Activated CD4-positive, alpha-beta T cell treated with anti-CD3 and anti-CD28 coated beads for 36 hours (primary cell): ENCODE measurements at regions of chr12 and their contacts with region 1.

Region 1: DNA sequence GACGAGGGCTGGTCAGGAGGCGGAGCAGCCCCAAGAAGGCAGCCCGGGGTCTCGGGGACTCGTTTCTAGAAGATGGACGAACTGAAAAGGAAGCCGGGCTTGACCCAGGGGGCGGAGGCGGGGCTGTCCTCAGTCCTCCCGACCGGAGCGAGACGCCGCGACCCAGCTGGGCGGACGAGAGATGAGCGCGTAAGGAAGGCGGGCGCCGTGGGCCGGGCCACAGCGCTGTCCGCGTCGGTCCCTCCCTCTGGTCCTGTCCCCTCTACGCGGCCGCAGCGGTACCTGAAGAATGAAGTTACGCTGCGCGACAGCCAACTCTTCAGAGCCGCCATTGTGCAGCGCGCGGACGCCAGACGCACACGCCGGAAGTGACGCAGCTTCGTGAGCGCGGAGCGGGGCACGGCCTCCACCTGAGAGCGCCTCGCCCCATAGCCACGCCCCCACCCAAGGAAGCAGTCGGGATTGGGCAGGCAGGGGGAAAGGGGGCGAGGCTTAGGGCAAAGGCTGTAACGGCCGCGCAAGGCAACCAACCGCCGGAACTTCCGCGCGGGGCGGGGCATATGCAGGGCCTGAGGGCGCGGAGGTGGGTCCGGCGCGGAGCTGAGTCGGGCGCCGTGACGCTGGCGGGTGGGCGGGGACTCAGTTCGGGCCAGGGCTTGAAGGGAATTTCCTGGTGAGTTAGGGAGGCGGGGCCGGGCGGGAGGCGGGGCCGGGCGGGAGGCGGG is at the start of gene DIABLO:
- DNase-seq: peak; percentile 100
- ATAC-seq: peak; percentile 98
- H3K4me3 Mint-ChIP-seq: peak within 1 kb of the TSS; percentile 92
- H3K27ac Mint-ChIP-seq: peak within 1 kb of the TSS; percentile 93
- H3K4me1 Mint-ChIP-seq: peaks cover 29% of the 10 kb centered on the region
- H3K27me3 Mint-ChIP-seq: no peaks in the 10 kb centered on the region
- total RNA-seq, gene DIABLO: 46.3 to 47.0 TPM

Region 2: GRCh38 chr12:121196902-121197301 is 1028.9 kb before region 1 on chr12:
- CTCF ChIA-PET with region 1: no interaction called
- POLR2A ChIA-PET with region 1: no interaction called
- intact Hi-C with region 1: no loop called
- DNase-seq: no peak
- ATAC-seq: peak; percentile 75
- H3K4me3 Mint-ChIP-seq: no peak overlapping the region
- H3K27ac Mint-ChIP-seq: no peak overlapping the region
- H3K4me1 Mint-ChIP-seq: peaks cover 12% of the 10 kb centered on the region
- H3K27me3 Mint-ChIP-seq: no peaks in the 10 kb centered on the region

Region 3: DNA sequence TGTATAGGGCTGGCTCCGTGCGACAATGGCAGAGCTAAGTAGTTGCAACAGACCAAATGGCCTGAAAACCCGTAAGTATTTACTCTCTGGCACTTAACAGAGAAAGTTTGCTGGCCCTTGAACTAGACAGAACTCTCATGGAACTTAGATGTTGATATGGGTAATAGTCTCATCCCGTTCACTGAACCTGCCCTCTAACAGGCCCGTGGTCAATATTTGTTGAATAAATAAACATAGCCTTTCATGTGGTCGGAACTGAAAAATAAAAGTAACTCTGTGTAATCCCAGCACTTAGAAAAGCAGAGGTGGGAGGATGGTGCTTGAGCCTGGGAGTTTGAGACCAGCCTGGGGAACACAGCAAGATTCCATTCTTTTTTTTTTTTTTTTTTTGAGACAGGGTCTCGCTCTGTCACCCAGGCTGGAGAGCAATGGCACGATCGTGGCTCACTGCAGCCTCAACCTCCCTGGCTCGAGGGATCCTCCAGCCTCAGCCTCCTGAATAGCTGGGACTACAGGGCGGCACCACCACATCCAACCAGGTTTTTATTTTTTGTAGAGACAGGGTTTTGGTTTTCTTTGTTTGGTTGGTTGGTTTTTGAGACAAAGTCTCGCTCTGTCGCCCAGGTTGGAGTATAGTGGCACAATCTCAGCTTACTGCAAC is 674.7 kb before region 1 on chr12:
- CTCF ChIA-PET with region 1: no interaction called
- POLR2A ChIA-PET with region 1: no interaction called
- intact Hi-C with region 1: no loop called
- DNase-seq: no peak
- ATAC-seq: no peak
- H3K4me3 Mint-ChIP-seq: no peak overlapping the region
- H3K27ac Mint-ChIP-seq: no peak overlapping the region
- H3K4me1 Mint-ChIP-seq: peaks cover 6% of the 10 kb centered on the region
- H3K27me3 Mint-ChIP-seq: no peaks in the 10 kb centered on the region

Region 4: GRCh38 chr12:121712461-121713256 is 513.2 kb before region 1 on chr12 and contains the start of gene TMEM120B:
- CTCF ChIA-PET with region 1: no interaction called
- POLR2A ChIA-PET with region 1: no interaction called
- intact Hi-C with region 1: loop called in 1 of 2 experiments (anchors 5 kb)
- DNase-seq: peak; percentile 90
- ATAC-seq: peak; percentile 87
- H3K4me3 Mint-ChIP-seq: peak within 1 kb of the TSS; percentile 95
- H3K27ac Mint-ChIP-seq: peak within 1 kb of the TSS; percentile 91
- H3K4me1 Mint-ChIP-seq: peaks cover 16% of the 10 kb centered on the region
- H3K27me3 Mint-ChIP-seq: no peaks in the 10 kb centered on the region
- total RNA-seq, gene TMEM120B: 8.8 to 11.7 TPM

Region 5: DNA sequence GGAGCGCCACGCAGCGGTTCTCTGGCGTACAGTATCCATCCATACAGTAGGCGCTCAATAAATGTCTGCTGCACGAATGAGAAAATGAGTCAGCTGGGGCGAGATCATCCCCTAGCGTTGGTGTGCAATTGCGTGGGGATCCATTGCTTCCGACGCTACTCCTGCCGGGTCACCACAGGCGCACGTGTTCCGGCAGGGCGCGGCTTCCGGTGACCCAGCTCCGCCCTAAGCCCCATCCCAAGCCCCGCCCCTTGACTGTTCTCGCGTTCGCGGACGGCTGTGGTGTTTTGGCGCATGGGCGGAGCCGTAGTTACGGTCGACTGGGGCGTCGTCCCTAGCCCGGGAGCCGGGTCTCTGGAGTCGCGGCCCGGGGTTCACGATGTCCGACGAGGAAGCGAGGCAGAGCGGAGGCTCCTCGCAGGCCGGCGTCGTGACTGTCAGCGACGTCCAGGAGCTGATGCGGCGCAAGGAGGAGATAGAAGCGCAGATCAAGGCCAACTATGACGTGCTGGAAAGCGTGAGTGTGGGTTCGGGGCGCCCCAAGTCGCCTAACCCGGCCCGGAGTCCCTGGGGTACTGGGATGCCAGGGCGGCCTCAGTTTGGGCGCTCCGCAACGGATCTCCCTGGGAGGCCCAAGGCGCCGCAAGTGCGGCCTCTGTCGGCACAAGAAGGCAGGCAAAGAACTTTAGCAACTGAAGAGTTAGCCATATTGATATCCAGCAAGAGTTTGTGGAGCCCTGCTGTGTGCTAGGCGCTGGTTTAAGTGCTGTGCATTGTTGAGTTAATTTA is 337.2 kb before region 1 on chr12 and contains the start of gene PSMD9:
- CTCF ChIA-PET with region 1: no interaction called
- POLR2A ChIA-PET with region 1: no interaction called
- intact Hi-C with region 1: loop called in 1 of 2 experiments (anchors 1 kb)
- DNase-seq: peak; percentile 99
- ATAC-seq: peak; percentile 94
- H3K4me3 Mint-ChIP-seq: peak within 1 kb of the TSS; percentile 89
- H3K27ac Mint-ChIP-seq: peak within 1 kb of the TSS; percentile 98
- H3K4me1 Mint-ChIP-seq: peaks cover 33% of the 10 kb centered on the region
- H3K27me3 Mint-ChIP-seq: no peaks in the 10 kb centered on the region
- total RNA-seq, gene PSMD9: 50.4 to 56.2 TPM

Region 6: GRCh38 chr12:122182887-122183585 is 42.8 kb before region 1 on chr12 and contains the start of gene LRRC43:
- CTCF ChIA-PET with region 1: no interaction called
- POLR2A ChIA-PET with region 1: no interaction called
- intact Hi-C with region 1: no loop called
- DNase-seq: peak; percentile 54
- ATAC-seq: peak; percentile 72
- H3K4me3 Mint-ChIP-seq: peak within 1 kb of the TSS; percentile 65
- H3K27ac Mint-ChIP-seq: no peak within 1 kb of the TSS
- H3K4me1 Mint-ChIP-seq: peaks cover 3% of the 10 kb centered on the region
- H3K27me3 Mint-ChIP-seq: peaks cover 11% of the 10 kb centered on the region
- total RNA-seq, gene LRRC43: 0.37 TPM in 1 of 2 experiments, not detected in the other

Region 7: DNA sequence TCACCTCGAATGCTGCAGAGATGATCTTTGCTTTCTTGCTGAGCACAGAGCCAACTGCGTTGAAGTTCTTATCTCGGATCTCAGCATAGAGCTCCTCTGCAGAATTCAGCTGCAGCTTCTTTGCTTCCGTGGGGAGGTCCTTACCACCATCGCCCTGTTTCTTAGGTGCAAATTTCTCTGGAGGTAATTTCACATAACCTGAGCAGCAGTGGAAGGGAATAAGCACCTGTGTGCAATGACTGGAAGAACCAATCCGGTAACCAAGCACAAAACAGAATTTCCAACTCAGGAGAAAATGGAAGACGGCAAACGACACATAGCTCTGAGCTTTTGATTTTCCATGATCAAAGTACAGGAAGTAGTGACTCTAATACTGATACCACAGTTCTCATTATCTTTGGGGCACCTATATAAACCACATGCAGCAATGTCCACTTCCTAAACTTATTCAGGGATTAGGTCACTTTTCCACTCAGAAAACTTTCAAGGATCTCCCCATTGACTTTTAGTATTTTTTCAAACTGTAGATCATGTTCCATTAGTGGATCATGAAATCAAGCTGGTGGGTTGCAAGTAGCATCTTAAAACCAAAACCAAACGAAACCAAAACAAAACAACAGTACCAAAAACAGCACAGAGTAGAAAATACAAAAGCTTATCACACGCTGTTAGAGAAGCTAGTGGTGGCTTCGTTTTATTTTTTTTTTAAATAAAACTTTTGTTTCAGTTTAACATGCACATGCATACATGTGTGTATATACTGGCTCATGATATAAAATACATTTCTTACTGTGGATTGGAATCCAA is 18.9 kb after region 1 on chr12:
- CTCF ChIA-PET with region 1: interaction called, 3 read pairs
- POLR2A ChIA-PET with region 1: interaction called, 7 read pairs
- intact Hi-C with region 1: loop called in 1 of 2 experiments (anchors 2 kb)
- DNase-seq: no peak
- ATAC-seq: peak; percentile 84
- H3K4me3 Mint-ChIP-seq: peak overlapping the region; percentile 64
- H3K27ac Mint-ChIP-seq: peak overlapping the region; percentile 92
- H3K4me1 Mint-ChIP-seq: peaks cover 28% of the 10 kb centered on the region
- H3K27me3 Mint-ChIP-seq: no peaks in the 10 kb centered on the region

Region 8: DNA sequence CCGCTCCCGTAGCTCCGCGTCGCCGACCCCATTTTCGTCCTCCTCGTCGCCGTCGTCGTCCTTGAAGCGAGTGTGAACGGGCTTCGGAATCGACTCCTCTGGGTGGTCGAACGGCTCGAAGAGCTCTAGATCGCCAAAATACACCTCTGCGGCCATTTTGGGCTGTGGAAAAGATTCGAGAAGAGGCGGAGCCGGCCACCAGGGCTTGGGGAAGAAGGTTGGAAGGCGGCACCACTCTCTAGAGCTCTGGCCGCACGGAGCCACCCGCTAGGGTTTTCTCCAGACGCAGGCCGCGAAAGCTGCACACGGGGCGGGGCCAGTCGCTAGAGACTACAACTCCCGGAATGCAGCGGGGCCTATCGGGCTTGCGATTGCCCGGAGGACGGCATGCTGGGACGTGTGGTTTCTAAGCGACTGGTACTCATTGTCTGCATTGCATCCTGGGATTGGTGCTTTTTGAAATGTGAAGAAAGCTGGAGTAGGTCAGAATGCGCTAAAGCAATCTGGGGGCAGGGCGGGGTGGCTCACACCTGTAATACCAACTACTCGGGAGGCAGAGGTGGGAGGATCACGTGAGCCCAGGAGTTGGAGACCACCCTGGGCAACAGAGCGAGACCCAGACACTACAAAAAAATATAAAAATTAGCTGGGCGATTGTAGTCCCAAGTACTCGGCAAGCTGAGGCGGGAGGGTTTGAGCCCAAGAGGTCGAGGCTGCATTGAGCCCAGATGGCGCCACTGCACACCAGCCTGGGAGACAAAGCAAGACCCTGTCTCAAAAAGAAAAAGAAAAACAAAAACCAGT is 275.0 kb after region 1 on chr12 and contains the start of gene ZCCHC8:
- CTCF ChIA-PET with region 1: no interaction called
- POLR2A ChIA-PET with region 1: interaction called, 7 read pairs
- intact Hi-C with region 1: loop called (anchors 1 kb)
- DNase-seq: peak; percentile 99
- ATAC-seq: peak; percentile 95
- H3K4me3 Mint-ChIP-seq: peak within 1 kb of the TSS; percentile 97
- H3K27ac Mint-ChIP-seq: peak within 1 kb of the TSS; percentile 98
- H3K4me1 Mint-ChIP-seq: peaks cover 32% of the 10 kb centered on the region
- H3K27me3 Mint-ChIP-seq: no peaks in the 10 kb centered on the region
- total RNA-seq, gene ZCCHC8: 34.7 to 39.1 TPM

Region 9: DNA sequence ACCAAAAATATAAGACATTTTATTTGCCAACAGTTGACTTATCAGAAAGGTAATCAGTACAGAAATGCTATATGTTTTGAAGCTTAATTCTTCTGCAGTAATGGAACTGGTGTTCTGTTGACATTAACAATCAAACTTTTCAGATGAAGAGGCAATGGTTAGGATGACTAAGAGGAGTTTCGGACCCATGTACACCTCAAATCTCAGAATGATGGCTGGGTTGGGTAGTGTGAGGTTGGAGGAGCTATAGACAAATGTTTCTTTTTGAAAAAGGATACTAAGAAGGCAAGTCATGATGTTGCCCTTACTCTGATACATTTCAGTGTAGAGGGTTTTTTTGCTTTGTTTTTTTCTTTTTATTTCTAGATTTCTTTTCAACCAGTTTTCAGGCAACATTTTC is 368.1 kb after region 1 on chr12:
- CTCF ChIA-PET with region 1: no interaction called
- POLR2A ChIA-PET with region 1: no interaction called
- intact Hi-C with region 1: no loop called
- DNase-seq: peak; percentile 32
- ATAC-seq: peak; percentile 94
- H3K4me3 Mint-ChIP-seq: no peak overlapping the region
- H3K27ac Mint-ChIP-seq: peak overlapping the region; percentile 70
- H3K4me1 Mint-ChIP-seq: peaks cover 8% of the 10 kb centered on the region
- H3K27me3 Mint-ChIP-seq: no peaks in the 10 kb centered on the region

Region 10: DNA sequence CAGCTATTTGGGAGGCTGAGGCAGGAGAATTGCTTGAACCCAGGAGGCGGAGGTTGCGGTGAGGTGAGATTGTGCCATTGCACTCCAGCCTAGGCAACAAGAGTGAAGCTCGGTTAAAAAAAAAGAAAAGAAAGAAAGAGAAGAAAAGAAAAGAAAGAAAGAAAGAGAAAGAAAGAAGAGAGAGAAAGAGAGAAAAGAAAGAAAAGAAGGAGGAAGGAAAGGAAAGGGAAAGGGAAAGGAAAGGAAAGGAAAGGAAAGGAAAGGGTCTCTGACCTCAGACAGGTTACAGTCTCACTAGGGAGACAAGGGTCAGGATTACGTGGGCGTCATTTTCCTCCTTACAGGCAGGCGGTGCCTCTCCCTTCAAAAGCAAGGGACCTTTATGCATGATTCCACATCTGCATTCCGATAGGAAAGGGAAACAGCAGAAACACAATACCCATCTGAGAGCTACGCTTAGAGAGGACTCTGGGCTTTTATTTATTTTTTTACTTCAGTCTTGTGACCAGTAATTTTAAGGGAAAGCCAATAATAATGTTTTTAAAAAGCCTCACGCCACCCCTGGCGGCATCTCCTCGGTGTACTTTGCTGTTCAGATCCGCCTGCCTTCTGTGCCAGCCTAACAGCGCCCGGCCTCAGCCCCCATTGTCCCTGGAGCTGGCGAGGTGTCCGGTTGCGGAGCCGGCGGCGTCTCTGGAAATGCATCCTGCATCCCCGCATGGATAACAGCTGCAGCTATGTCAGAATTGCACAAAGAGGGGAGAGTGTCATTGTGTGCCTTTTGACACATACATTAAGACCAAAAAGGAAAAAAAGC is 608.5 kb after region 1 on chr12:
- CTCF ChIA-PET with region 1: no interaction called
- POLR2A ChIA-PET with region 1: no interaction called
- intact Hi-C with region 1: loop called in 1 of 2 experiments (anchors 5 kb)
- DNase-seq: peak; percentile 48
- ATAC-seq: peak; percentile 8
- H3K4me3 Mint-ChIP-seq: peak overlapping the region; percentile 75
- H3K27ac Mint-ChIP-seq: peak overlapping the region; percentile 74
- H3K4me1 Mint-ChIP-seq: peaks cover 31% of the 10 kb centered on the region
- H3K27me3 Mint-ChIP-seq: peaks cover 3% of the 10 kb centered on the region

Region 11: DNA sequence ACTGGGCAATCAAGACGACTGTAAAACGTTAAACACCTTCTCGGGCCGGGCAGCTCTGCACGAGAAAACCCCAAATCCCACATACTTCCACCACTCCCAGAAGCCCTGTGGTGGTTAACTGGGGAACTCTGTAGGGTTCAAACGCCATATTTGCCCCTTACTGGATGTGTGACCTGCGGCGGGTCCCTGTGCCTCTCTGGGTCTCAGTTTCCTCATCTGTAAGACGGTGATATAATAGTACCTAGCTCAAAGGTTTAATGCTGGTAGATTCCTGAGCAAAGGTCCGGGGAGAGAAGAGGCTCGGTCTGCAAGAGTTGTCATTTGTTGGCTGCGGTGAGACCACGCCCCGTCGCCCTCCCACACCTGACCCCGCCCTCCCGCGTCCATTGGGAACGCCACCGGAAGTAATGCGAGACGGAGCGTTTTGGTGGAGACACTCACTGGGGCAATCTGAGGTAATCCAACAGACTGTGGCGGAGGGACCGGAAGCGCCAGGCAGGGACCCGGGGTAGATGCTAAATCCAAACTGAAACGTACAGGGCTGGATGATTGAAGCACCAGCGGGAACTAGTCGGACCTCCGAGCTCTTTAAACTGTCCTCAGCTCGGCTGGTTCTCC is 748.5 kb after region 1 on chr12:
- CTCF ChIA-PET with region 1: no interaction called
- POLR2A ChIA-PET with region 1: no interaction called
- intact Hi-C with region 1: loop called in 1 of 2 experiments (anchors 1 kb)
- DNase-seq: peak; percentile 99
- ATAC-seq: peak; percentile 86
- H3K4me3 Mint-ChIP-seq: peak overlapping the region; percentile 95
- H3K27ac Mint-ChIP-seq: peak overlapping the region; percentile 100
- H3K4me1 Mint-ChIP-seq: peaks cover 21% of the 10 kb centered on the region
- H3K27me3 Mint-ChIP-seq: no peaks in the 10 kb centered on the region